ENCODE measurements at regions of chr5 and their contacts with region 1.

Region 1: GRCh38 chr5:57302164-57302563 is 128.3 kb downstream of the GPBP1 start:
- DNase-seq: no peak
- ATAC-seq: no peak
- H3K4me3 ChIP-seq: no peak overlapping the region
- H3K27ac ChIP-seq: no peak overlapping the region
- H3K4me1 ChIP-seq: peaks cover 10% of the 10 kb centered on the region
- H3K27me3 ChIP-seq: no peaks in the 10 kb centered on the region
- CTCF ChIP-seq: no peak
- POLR2A ChIP-seq: no peak

Region 2: DNA sequence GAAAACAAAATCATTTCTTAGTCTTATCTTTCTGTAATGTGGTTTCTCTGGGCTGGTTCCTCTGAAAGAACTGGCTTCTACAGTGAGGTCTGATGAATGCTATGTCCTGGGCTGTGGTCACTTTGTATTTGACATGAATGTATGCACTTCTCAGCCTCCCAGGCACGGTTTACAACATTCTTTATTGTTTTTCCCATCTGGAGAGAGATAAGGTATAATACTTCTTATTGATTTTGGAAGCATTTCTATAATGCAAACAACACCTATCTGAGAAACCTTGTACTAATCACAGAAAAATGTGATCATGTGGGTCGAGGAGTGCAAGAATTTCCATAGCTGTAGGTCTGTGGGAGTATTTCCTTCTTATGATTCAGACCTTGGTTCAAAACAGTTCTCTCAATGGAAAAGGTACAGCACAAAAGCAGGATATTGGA is 133.6 kb after region 1 on chr5:
- intact Hi-C with region 1: no loop called
- DNase-seq: peak; percentile 33 to 70 (median 47)
- ATAC-seq: peak; percentile 95
- H3K4me3 ChIP-seq: no peak overlapping the region
- H3K27ac ChIP-seq: peak overlapping the region; percentile 54 to 88 (median 80)
- H3K4me1 ChIP-seq: peaks cover 44% of the 10 kb centered on the region
- H3K27me3 ChIP-seq: no peaks in the 10 kb centered on the region
- CTCF ChIP-seq: no peak
- POLR2A ChIP-seq: peak in 1 of 3 donors; percentile 10

Region 3: DNA sequence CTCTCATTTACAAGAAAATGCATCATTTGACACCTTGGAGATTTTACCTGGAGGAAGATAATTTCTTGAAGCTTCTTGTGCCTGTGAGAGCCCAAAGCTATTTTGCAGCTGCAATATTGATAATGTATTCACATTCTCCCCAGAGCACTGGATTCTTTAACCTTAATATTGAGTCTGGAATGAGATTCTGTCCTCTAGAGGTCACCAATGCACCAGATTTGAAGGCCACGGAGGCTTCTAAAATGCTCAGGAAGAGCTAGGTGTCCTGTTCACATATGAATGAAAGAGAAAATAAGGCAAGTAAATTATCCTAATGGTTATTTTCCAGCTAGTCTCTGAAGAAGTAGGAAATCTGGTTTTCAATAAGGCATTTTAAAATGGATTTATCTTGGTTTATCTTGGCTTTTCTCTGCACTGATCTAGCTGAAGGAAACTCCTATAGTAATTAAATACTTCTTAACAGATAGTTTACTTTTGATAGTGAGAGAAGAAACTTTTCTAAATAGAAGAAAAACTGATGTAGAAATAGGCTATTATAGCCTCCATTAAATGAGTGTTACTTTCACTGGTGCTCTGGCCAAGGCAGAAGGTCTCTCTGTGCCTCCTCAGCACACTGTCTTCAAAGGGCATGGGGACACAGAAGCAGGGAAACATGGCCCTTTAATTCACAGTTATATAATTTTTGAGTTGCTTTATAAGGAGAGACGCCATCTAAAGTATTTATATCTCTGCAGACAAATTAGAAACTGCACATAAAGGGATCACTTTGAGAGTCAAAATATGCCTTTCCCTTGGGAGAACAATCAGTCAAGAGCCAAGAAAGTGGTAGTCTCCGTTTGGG is 477.4 kb after region 1 on chr5:
- intact Hi-C with region 1: loop called (anchors 10 kb)
- DNase-seq: peak; percentile 40 to 51 (median 46)
- ATAC-seq: peak; percentile 74
- H3K4me3 ChIP-seq: no peak overlapping the region
- H3K27ac ChIP-seq: no peak overlapping the region
- H3K4me1 ChIP-seq: peaks cover 36% of the 10 kb centered on the region
- H3K27me3 ChIP-seq: no peaks in the 10 kb centered on the region
- CTCF ChIP-seq: peak; percentile 44 to 77 (median 60)
- POLR2A ChIP-seq: no peak